ENCODE measurements at regions of chr2 and their contacts with region 1.

Region 1: DNA sequence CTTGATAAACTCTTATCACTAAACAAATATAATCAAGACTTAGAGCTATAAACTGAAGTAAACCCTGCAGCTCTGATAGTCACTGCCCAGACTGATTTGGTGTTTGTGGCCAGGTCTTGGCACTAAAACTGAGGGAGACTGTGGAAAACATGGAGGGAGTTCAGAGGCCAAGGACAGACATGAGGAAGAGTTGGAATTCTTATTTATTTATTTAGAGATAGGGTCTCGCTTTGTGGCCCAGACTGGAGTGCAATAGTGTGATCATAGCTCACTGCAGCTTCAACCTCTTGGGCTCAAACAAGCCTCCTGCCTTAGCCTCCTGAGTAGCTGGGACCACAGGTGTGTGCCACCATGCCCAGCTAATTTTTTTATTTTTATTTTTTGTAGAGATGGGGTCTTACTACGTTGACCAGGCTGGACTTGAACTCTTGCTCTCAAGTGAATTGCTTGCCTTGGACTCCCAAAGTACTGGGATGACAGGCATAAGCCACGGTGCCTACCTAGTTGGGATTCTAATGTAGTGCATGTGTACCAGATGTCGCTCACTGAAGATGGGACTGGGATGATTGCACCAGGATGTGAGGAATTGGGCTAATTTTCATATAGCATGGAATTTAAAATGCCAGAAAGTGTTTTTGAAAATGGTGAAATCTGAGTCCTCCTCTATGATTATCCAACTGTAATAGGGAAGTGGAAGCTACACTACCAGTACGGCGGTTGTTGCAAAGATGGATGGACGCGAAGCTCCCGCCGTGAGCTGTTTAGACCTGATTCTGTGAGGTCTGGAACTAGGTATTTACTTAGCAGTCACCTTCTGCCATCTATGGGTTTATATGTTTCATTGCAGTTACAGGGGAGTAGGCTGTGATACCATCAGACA is 52.7 kb upstream of the CTLA4 start:
- DNase-seq: peak; percentile 53 to 76 (median 72)
- H3K4me3 ChIP-seq: peak overlapping the region in 1 of 2 donors; percentile 21
- H3K4me3 Mint-ChIP-seq: peak overlapping the region; percentile 57 to 86 (median 80)
- H3K27ac ChIP-seq: no peak overlapping the region
- H3K27ac Mint-ChIP-seq: peak overlapping the region; percentile 30 to 86 (median 74)
- H3K4me1 ChIP-seq: peaks cover 49% of the 10 kb centered on the region
- H3K4me1 Mint-ChIP-seq: peaks cover 20 to 54% (median 38%) of the 10 kb centered on the region in 4 donors
- H3K27me3 ChIP-seq: no peaks in the 10 kb centered on the region
- H3K27me3 Mint-ChIP-seq: no peaks in the 10 kb centered on the region

Region 2: DNA sequence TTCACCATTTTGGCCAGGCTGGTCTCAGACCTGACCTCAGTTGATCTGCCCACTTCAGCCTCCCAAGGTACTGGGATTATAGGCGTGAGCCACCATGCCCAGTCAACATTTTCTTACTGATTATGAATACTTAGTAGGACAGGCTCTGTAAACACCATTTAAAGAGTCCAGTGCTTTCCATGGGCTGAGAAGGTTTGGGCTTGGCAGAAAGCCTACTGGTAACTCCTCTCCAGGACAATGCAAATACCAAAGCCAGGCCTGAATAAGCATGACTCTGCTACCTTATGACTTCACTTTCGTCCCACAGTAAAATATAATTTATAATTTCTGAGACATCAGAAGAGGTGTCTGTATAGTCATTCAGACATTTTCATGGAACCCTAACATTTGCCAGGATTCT is 1240.4 kb before region 1 on chr2:
- CTCF ChIA-PET with region 1: interaction called, 4 read pairs
- POLR2A ChIA-PET with region 1: no interaction called
- intact Hi-C with region 1: loop called (anchors 5 kb)
- DNase-seq: no peak
- H3K4me3 ChIP-seq: no peak overlapping the region
- H3K4me3 Mint-ChIP-seq: no peak overlapping the region
- H3K27ac ChIP-seq: no peak overlapping the region
- H3K27ac Mint-ChIP-seq: peak overlapping the region in 1 of 7 donors; percentile 37
- H3K4me1 ChIP-seq: no peaks in the 10 kb centered on the region
- H3K4me1 Mint-ChIP-seq: no peaks in the 10 kb centered on the region
- H3K27me3 ChIP-seq: no peaks in the 10 kb centered on the region
- H3K27me3 Mint-ChIP-seq: no peaks in the 10 kb centered on the region

Region 3: GRCh38 chr2:203225423-203226039 is 589.4 kb before region 1 on chr2:
- CTCF ChIA-PET with region 1: interaction called, 29 read pairs
- POLR2A ChIA-PET with region 1: no interaction called
- intact Hi-C with region 1: loop called (anchors 1 kb)
- DNase-seq: peak in 4 of 5 donors; percentile 20 to 37 (median 28)
- H3K4me3 ChIP-seq: no peak overlapping the region
- H3K4me3 Mint-ChIP-seq: no peak overlapping the region
- H3K27ac ChIP-seq: no peak overlapping the region
- H3K27ac Mint-ChIP-seq: no peak overlapping the region
- H3K4me1 ChIP-seq: no peaks in the 10 kb centered on the region
- H3K4me1 Mint-ChIP-seq: no peaks in the 10 kb centered on the region
- H3K27me3 ChIP-seq: no peaks in the 10 kb centered on the region
- H3K27me3 Mint-ChIP-seq: no peaks in the 10 kb centered on the region

Region 4: GRCh38 chr2:203492965-203493364 is 321.9 kb before region 1 on chr2:
- CTCF ChIA-PET with region 1: interaction called, 93 read pairs
- POLR2A ChIA-PET with region 1: interaction called, 4 read pairs
- intact Hi-C with region 1: no loop called
- DNase-seq: peak in 2 of 5 donors; percentile 6 to 17
- H3K4me3 ChIP-seq: no peak overlapping the region
- H3K4me3 Mint-ChIP-seq: peak overlapping the region in 1 of 8 donors; percentile 46
- H3K27ac ChIP-seq: no peak overlapping the region
- H3K27ac Mint-ChIP-seq: peak overlapping the region in 6 of 7 donors; percentile 23 to 85 (median 52)
- H3K4me1 ChIP-seq: no peaks in the 10 kb centered on the region
- H3K4me1 Mint-ChIP-seq: peaks cover 0 to 13% (median 0%) of the 10 kb centered on the region in 4 donors
- H3K27me3 ChIP-seq: no peaks in the 10 kb centered on the region
- H3K27me3 Mint-ChIP-seq: no peaks in the 10 kb centered on the region

Region 5: GRCh38 chr2:203718087-203718486 is 96.8 kb before region 1 on chr2:
- CTCF ChIA-PET with region 1: interaction called, 19 read pairs
- POLR2A ChIA-PET with region 1: interaction called, 6 read pairs
- intact Hi-C with region 1: no loop called
- DNase-seq: peak; percentile 65 to 82 (median 70)
- H3K4me3 ChIP-seq: peak overlapping the region in 1 of 2 donors; percentile 32
- H3K4me3 Mint-ChIP-seq: peak overlapping the region; percentile 75 to 92 (median 80)
- H3K27ac ChIP-seq: peak overlapping the region; percentile 52
- H3K27ac Mint-ChIP-seq: peak overlapping the region; percentile 94 to 98 (median 95)
- H3K4me1 ChIP-seq: peaks cover 100% of the 10 kb centered on the region
- H3K4me1 Mint-ChIP-seq: peaks cover 86 to 99% (median 93%) of the 10 kb centered on the region in 4 donors
- H3K27me3 ChIP-seq: no peaks in the 10 kb centered on the region
- H3K27me3 Mint-ChIP-seq: no peaks in the 10 kb centered on the region

Region 6: DNA sequence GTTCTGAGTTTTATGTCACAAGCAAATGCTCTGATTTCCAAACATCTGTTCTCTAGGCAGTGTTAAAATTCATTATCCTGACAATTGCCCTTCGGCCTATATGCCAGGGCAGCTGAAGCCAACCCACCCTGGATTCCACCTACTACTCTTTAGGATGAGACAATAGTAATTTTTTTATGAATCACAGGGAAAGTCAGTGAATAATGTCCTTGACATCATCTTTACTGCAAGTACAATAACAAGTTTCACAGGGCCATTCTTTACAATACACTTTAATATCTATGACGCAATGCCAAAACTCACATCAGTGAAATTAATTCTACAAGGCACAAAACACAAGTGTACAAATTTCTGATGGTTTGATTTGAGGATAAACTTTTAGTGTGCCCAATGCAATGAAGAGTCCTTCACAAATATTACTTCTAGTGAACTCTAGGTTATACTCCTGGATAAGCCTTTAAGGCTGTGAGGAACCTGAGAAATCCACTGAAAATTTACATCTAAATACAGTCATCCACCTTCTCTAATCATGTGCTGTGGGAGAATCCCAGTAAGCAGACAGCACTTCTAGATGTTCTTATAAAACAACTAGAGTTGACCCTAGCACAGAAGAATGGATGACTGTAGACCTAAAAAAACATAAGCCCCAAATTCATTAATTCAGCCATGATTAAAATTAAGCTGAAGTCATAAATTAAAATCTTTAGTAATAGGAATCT is 24.6 kb before region 1 on chr2:
- CTCF ChIA-PET with region 1: interaction called, 59 read pairs
- POLR2A ChIA-PET with region 1: interaction called, 4 read pairs
- intact Hi-C with region 1: no loop called
- DNase-seq: no peak
- H3K4me3 ChIP-seq: no peak overlapping the region
- H3K4me3 Mint-ChIP-seq: no peak overlapping the region
- H3K27ac ChIP-seq: no peak overlapping the region
- H3K27ac Mint-ChIP-seq: no peak overlapping the region
- H3K4me1 ChIP-seq: no peaks in the 10 kb centered on the region
- H3K4me1 Mint-ChIP-seq: peaks cover 0 to 2% (median 0%) of the 10 kb centered on the region in 4 donors
- H3K27me3 ChIP-seq: no peaks in the 10 kb centered on the region
- H3K27me3 Mint-ChIP-seq: peaks cover 0 to 1% of the 10 kb centered on the region in 2 donors

Region 7: GRCh38 chr2:203871371-203871983 is 56.6 kb after region 1 on chr2:
- CTCF ChIA-PET with region 1: interaction called, 22 read pairs
- POLR2A ChIA-PET with region 1: interaction called, 11 read pairs
- intact Hi-C with region 1: no loop called
- DNase-seq: no peak
- H3K4me3 ChIP-seq: peak overlapping the region; percentile 17 to 54
- H3K4me3 Mint-ChIP-seq: peak overlapping the region; percentile 85 to 95 (median 90)
- H3K27ac ChIP-seq: peak overlapping the region; percentile 59
- H3K27ac Mint-ChIP-seq: peak overlapping the region; percentile 41 to 89 (median 81)
- H3K4me1 ChIP-seq: peaks cover 84% of the 10 kb centered on the region
- H3K4me1 Mint-ChIP-seq: peaks cover 58 to 87% (median 74%) of the 10 kb centered on the region in 4 donors
- H3K27me3 ChIP-seq: no peaks in the 10 kb centered on the region
- H3K27me3 Mint-ChIP-seq: no peaks in the 10 kb centered on the region